ENCODE measurements at regions of chr1 and their contacts with region 1.

Region 1: GRCh38 chr1:74771913-74772515 is 39.1 kb downstream of the TYW3 start:
- DNase-seq: no peak
- ATAC-seq: no peak
- H3K4me3 ChIP-seq: peak overlapping the region in 2 of 4 donors; percentile 7 to 11
- H3K27ac ChIP-seq: no peak overlapping the region
- H3K4me1 ChIP-seq: no peaks in the 10 kb centered on the region
- H3K27me3 ChIP-seq: no peaks in the 10 kb centered on the region
- CTCF ChIP-seq: peak in 4 of 5 experiments; percentile 40 to 69 (median 56)
- POLR2A ChIP-seq: no peak

Region 2: GRCh38 chr1:74650561-74650960 is 121.5 kb before region 1 on chr1:
- in situ Hi-C with region 1: no loop called
- intact Hi-C with region 1: no loop called
- DNase-seq: no peak
- ATAC-seq: no peak
- H3K4me3 ChIP-seq: no peak overlapping the region
- H3K27ac ChIP-seq: no peak overlapping the region
- H3K4me1 ChIP-seq: no peaks in the 10 kb centered on the region
- H3K27me3 ChIP-seq: no peaks in the 10 kb centered on the region
- CTCF ChIP-seq: no peak
- POLR2A ChIP-seq: no peak

Region 3: DNA sequence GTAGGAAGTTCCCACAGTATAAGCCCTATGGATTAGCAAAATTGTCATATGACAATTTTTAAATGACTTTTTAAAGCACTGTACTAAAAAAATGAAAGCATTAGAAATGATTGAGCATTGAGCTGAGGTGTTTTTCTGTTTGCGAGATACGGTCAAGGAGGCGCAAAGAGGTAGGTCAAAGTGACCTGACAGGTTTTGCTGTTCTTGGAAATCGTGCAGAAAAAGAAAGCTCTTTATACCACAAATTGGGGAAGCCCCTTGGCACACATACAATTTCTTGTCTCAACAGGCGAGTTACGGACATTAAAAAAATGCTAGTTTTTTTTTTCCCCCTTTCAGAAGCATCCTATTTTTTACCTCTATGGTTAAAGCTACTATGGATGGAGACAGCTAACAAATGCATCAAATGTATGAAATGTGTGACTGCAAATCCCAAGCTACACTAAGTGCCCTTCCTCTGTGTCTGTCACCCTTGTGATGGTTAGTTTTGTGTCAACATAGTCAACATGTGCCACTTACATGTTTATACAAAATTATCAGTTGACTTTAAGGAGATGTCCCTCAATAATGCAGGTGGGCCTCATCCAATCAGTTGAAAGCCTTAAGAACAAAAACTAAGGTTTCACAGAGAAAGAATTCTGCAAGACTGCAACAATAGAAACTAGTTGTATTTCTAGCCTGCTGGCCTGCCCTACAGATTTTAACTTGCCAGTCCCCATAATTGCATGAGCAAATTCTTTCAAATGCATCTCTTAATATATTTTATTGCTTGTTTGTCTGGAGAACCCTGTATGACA is 68.4 kb before region 1 on chr1:
- in situ Hi-C with region 1: no loop called
- intact Hi-C with region 1: no loop called
- DNase-seq: no peak
- ATAC-seq: no peak
- H3K4me3 ChIP-seq: no peak overlapping the region
- H3K27ac ChIP-seq: no peak overlapping the region
- H3K4me1 ChIP-seq: no peaks in the 10 kb centered on the region
- H3K27me3 ChIP-seq: no peaks in the 10 kb centered on the region
- CTCF ChIP-seq: no peak
- POLR2A ChIP-seq: no peak

Region 4: DNA sequence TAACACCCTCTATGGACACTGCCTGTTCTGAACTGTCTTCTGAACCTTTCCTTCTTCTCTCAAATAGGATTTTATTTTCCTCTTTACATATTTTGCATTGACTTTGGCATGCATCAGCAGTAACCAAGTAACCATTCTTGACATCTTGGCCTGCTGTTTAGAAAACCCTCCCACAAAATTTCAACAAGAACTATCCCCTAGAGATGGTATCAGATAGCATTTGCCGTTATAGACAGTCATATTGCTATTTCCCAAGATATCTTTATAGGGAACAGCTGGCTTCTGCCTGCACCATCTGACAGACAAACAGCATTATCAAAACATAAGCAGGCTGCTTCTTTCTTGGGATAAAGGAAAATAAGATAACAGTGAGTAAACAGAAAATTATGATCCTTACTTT is 416.9 kb after region 1 on chr1:
- in situ Hi-C with region 1: loop called in 1 of 4 experiments (anchors 25 kb)
- intact Hi-C with region 1: no loop called
- DNase-seq: no peak
- ATAC-seq: no peak
- H3K4me3 ChIP-seq: no peak overlapping the region
- H3K27ac ChIP-seq: no peak overlapping the region
- H3K4me1 ChIP-seq: no peaks in the 10 kb centered on the region
- H3K27me3 ChIP-seq: peaks cover 0 to 2% (median 0%) of the 10 kb centered on the region in 3 donors
- CTCF ChIP-seq: no peak
- POLR2A ChIP-seq: no peak

Region 5: GRCh38 chr1:75203415-75204277 is 431.6 kb after region 1 on chr1:
- in situ Hi-C with region 1: loop called (anchors 5 to 25 kb)
- intact Hi-C with region 1: loop called (anchors 1 kb)
- DNase-seq: no peak
- ATAC-seq: no peak
- H3K4me3 ChIP-seq: no peak overlapping the region
- H3K27ac ChIP-seq: no peak overlapping the region
- H3K4me1 ChIP-seq: no peaks in the 10 kb centered on the region
- H3K27me3 ChIP-seq: no peaks in the 10 kb centered on the region
- CTCF ChIP-seq: peak in 3 of 5 experiments; percentile 21 to 57 (median 49)
- POLR2A ChIP-seq: no peak